Naive thymus-derived CD4-positive, alpha-beta T cell (primary cell): ENCODE measurements at regions of chr21 and their contacts with region 1.

Region 1: GRCh38 chr21:46458315-46459023 is at the start of gene DIP2A:
- DNase-seq: peak; percentile 93 to 97 (median 96)
- ATAC-seq: peak; percentile 98
- H3K4me3 ChIP-seq: peak within 1 kb of the TSS; percentile 81
- H3K4me3 Mint-ChIP-seq: peak within 1 kb of the TSS; percentile 86 to 96 (median 92)
- H3K27ac ChIP-seq: peak within 1 kb of the TSS; percentile 94
- H3K27ac Mint-ChIP-seq: peak within 1 kb of the TSS; percentile 85 to 97 (median 91)
- H3K4me1 ChIP-seq: peaks cover 4 to 17% of the 10 kb centered on the region in 2 donors
- H3K4me1 Mint-ChIP-seq: peaks cover 28 to 62% (median 48%) of the 10 kb centered on the region in 7 donors
- H3K27me3 ChIP-seq: no peaks in the 10 kb centered on the region
- H3K27me3 Mint-ChIP-seq: no peaks in the 10 kb centered on the region
- total RNA-seq, gene DIP2A: 54.7 to 118 (median 108) TPM

Region 2: GRCh38 chr21:45973659-45974072 is 484.8 kb before region 1 on chr21:
- CTCF ChIA-PET with region 1: no interaction called
- POLR2A ChIA-PET with region 1: no interaction called
- intact Hi-C with region 1: loop called in 1 of 2 experiments (anchors 5 kb)
- DNase-seq: peak; percentile 59 to 84 (median 77)
- ATAC-seq: peak; percentile 94
- H3K4me3 ChIP-seq: peak overlapping the region; percentile 78
- H3K4me3 Mint-ChIP-seq: peak overlapping the region; percentile 75 to 94 (median 92)
- H3K27ac ChIP-seq: peak overlapping the region; percentile 50
- H3K27ac Mint-ChIP-seq: peak overlapping the region in 8 of 9 donors; percentile 41 to 91 (median 80)
- H3K4me1 ChIP-seq: peaks cover 20 to 22% of the 10 kb centered on the region in 2 donors
- H3K4me1 Mint-ChIP-seq: peaks cover 5 to 28% (median 18%) of the 10 kb centered on the region in 7 donors
- H3K27me3 ChIP-seq: peaks cover 0 to 13% of the 10 kb centered on the region in 2 donors
- H3K27me3 Mint-ChIP-seq: peaks cover 0 to 44% (median 10%) of the 10 kb centered on the region in 5 donors

Region 3: GRCh38 chr21:46048926-46049889 is 409.3 kb before region 1 on chr21:
- CTCF ChIA-PET with region 1: no interaction called
- POLR2A ChIA-PET with region 1: no interaction called
- intact Hi-C with region 1: no loop called
- DNase-seq: no peak
- ATAC-seq: no peak
- H3K4me3 ChIP-seq: no peak overlapping the region
- H3K4me3 Mint-ChIP-seq: no peak overlapping the region
- H3K27ac ChIP-seq: no peak overlapping the region
- H3K27ac Mint-ChIP-seq: no peak overlapping the region
- H3K4me1 ChIP-seq: no peaks in the 10 kb centered on the region
- H3K4me1 Mint-ChIP-seq: no peaks in the 10 kb centered on the region
- H3K27me3 ChIP-seq: no peaks in the 10 kb centered on the region
- H3K27me3 Mint-ChIP-seq: no peaks in the 10 kb centered on the region

Region 4: GRCh38 chr21:46424039-46424591 is 34.4 kb before region 1 on chr21:
- CTCF ChIA-PET with region 1: no interaction called
- POLR2A ChIA-PET with region 1: interaction called, 6 read pairs
- intact Hi-C with region 1: loop called in 1 of 2 experiments (anchors 1 kb)
- DNase-seq: peak in 6 of 9 donors; percentile 24 to 48 (median 34)
- ATAC-seq: peak; percentile 45
- H3K4me3 ChIP-seq: peak overlapping the region; percentile 20
- H3K4me3 Mint-ChIP-seq: peak overlapping the region in 9 of 10 donors; percentile 59 to 82 (median 72)
- H3K27ac ChIP-seq: peak overlapping the region; percentile 78
- H3K27ac Mint-ChIP-seq: peak overlapping the region; percentile 65 to 98 (median 91)
- H3K4me1 ChIP-seq: peaks cover 8 to 34% of the 10 kb centered on the region in 2 donors
- H3K4me1 Mint-ChIP-seq: peaks cover 5 to 40% (median 16%) of the 10 kb centered on the region in 7 donors
- H3K27me3 ChIP-seq: no peaks in the 10 kb centered on the region
- H3K27me3 Mint-ChIP-seq: no peaks in the 10 kb centered on the region

Region 5: DNA sequence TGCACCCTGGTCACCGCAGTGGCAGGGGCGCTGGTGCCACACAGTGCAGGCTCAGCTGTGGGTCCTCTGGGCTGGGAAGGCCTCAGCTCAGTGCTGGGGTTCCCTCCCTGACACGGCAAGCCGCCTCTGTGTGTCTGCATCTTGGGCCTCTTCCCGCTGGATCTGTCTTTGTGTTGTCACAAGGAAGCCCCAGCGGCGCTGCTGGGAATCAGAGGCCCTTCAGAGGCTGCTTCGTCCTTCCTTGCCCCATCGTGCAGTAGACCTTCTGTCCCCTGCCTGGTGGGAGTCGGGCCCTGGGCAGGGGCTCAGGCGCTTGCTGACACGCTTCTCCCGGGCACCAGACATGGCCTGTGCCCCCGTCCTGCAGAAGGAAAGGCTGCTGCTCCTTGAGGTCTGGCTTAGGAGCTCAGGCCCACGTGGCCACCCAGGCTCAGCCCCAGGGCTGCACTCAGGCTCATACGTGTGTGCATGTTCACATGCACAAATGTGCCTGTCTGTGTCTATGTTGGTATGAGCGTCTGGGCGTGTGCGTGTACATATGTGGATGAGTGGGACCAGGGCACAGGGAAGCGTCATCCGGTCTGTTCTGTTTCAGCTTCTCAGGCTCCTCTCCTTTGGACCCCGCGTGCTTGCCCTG is 24.0 kb before region 1 on chr21:
- CTCF ChIA-PET with region 1: no interaction called
- POLR2A ChIA-PET with region 1: no interaction called
- intact Hi-C with region 1: no loop called
- DNase-seq: no peak
- ATAC-seq: no peak
- H3K4me3 ChIP-seq: no peak overlapping the region
- H3K4me3 Mint-ChIP-seq: no peak overlapping the region
- H3K27ac ChIP-seq: no peak overlapping the region
- H3K27ac Mint-ChIP-seq: no peak overlapping the region
- H3K4me1 ChIP-seq: no peaks in the 10 kb centered on the region
- H3K4me1 Mint-ChIP-seq: peaks cover 0 to 6% (median 0%) of the 10 kb centered on the region in 7 donors
- H3K27me3 ChIP-seq: no peaks in the 10 kb centered on the region
- H3K27me3 Mint-ChIP-seq: no peaks in the 10 kb centered on the region

Region 6: DNA sequence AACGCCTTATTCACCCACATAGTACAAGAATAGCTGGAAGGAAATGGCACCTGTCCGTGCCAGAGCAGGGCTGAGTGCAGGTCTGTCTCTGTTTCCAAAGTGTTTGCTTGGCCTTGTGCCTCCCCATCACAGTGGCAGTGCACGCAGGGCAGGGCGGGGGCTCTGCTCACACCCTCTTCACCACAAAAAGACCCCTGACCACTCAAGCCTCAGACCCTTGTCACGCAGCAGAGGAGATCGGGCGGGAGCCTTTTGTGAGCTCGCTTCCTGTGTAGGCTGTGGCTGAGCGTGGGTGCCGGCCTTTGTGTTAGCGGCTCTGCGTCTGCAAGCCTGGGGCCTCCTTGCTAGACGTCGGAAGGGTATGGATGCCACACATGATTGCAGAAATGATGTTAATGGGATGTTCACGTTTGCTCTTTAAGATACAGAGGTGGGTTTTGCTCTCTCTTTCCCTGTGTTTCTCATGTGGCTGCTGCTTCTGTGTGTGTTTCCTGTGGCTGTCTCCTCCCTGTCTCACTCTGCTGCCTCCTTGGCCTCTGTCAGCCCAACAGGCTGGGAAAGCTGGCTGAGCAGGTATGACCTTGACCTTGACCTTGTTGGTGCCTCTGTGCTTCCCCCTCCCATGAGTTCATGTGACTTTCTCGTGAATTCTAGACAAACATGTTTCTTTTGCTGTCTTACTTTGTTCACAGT is 101.0 kb after region 1 on chr21:
- CTCF ChIA-PET with region 1: no interaction called
- POLR2A ChIA-PET with region 1: interaction called, 3 read pairs
- intact Hi-C with region 1: loop called in 1 of 2 experiments (anchors 1 kb)
- DNase-seq: peak; percentile 29 to 85 (median 76)
- ATAC-seq: peak; percentile 85
- H3K4me3 ChIP-seq: peak overlapping the region; percentile 24
- H3K4me3 Mint-ChIP-seq: peak overlapping the region; percentile 76 to 91 (median 82)
- H3K27ac ChIP-seq: peak overlapping the region; percentile 84
- H3K27ac Mint-ChIP-seq: peak overlapping the region; percentile 95 to 99 (median 97)
- H3K4me1 ChIP-seq: peaks cover 37 to 85% of the 10 kb centered on the region in 2 donors
- H3K4me1 Mint-ChIP-seq: peaks cover 39 to 95% (median 78%) of the 10 kb centered on the region in 7 donors
- H3K27me3 ChIP-seq: no peaks in the 10 kb centered on the region
- H3K27me3 Mint-ChIP-seq: no peaks in the 10 kb centered on the region